Tibial artery (tissue), 4 donors: ENCODE measurements at regions of chr10 and their contacts with region 1.

Region 1: GRCh38 chr10:101014230-101014884 is 14.7 kb downstream of the LZTS2 start:
- DNase-seq: peak; percentile 80 to 89
- H3K4me3 ChIP-seq: no peak overlapping the region
- H3K27ac ChIP-seq: no peak overlapping the region
- H3K4me1 ChIP-seq: peaks cover 0 to 24% (median 21%) of the 10 kb centered on the region in 4 donors
- H3K27me3 ChIP-seq: peaks cover 0 to 31% of the 10 kb centered on the region in 2 donors
- CTCF ChIP-seq: peak; percentile 91 to 96

Region 2: DNA sequence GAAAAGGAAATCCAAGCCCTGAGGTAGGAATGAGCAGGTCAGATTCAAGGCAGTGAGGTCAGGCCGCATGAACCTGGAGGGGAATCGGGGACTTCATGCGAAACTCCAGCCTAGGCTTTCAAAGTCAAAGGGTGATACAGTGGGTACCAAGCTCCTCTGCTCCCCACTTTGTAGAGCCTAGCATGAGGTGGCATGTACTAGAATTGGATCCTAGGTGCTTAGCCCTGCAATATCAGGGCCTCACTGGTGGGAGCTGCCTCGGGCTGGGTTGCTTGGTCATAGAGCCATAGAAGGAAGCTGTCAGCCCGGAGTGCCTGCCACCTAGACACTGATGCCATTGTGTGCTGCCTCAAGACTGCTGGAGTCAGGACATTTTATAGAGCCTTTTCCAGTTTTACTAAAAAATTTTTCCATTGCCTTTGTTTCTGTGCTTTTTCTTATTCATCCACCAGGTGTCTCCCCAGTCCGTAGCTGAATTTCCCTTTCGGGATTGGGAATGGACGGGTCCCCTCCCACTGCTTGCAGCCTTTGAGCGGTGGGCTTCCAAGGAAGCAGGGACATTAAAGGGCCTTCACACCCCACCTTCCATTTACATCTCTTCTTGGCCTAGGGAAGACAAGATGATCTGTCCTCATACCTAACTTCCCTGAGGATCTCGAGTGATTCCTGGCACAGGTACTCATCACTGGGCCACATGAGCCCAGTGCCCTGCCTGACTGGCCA is 20.2 kb before region 1 on chr10:
- intact Hi-C with region 1: loop called (anchors 2 kb)
- DNase-seq: no peak
- H3K4me3 ChIP-seq: no peak overlapping the region
- H3K27ac ChIP-seq: no peak overlapping the region
- H3K4me1 ChIP-seq: peaks cover 0 to 22% (median 14%) of the 10 kb centered on the region in 4 donors
- H3K27me3 ChIP-seq: no peaks in the 10 kb centered on the region
- CTCF ChIP-seq: peak; percentile 73 to 90